Breast epithelium (tissue), 4 donors: ENCODE measurements at regions of chr13 and their contacts with region 1.

Region 1: GRCh38 chr13:46267166-46267565 is 55.4 kb downstream of the LRRC63 start:
- DNase-seq: no peak
- H3K4me3 ChIP-seq: no peak overlapping the region
- H3K27ac ChIP-seq: no peak overlapping the region
- H3K4me1 ChIP-seq: no peaks in the 10 kb centered on the region
- H3K27me3 ChIP-seq: no peaks in the 10 kb centered on the region
- CTCF ChIP-seq: no peak
- POLR2A ChIP-seq: no peak

Region 2: DNA sequence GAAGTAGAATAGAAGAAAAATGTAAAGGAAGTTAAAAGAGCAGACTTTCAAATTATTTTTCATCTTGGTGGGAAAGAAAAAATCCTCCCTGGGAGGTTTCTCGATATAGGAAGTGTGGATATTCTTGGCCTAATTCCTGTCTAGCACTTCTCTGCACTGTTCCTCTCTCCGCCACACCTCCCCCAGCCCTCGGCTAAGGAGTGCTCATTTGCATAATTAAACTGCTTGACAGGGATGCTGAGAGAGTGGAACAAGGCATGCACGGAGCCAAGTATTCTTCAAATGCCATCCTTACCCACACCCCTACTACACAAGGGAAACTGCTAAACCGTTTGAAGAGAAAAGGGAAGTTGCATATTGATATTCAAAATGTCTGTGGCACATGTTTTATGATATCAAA is 1140.6 kb after region 1 on chr13:
- intact Hi-C with region 1: loop called (anchors 10 kb)
- DNase-seq: no peak
- H3K4me3 ChIP-seq: no peak overlapping the region
- H3K27ac ChIP-seq: no peak overlapping the region
- H3K4me1 ChIP-seq: no peaks in the 10 kb centered on the region
- H3K27me3 ChIP-seq: no peaks in the 10 kb centered on the region
- CTCF ChIP-seq: no peak
- POLR2A ChIP-seq: no peak